ENCODE measurements at regions of chr17 and their contacts with region 1.

Region 1: GRCh38 chr17:50841949-50842354 is 6.6 kb downstream of the WFIKKN2 start:
- DNase-seq: peak; percentile 89 to 94
- H3K4me3 ChIP-seq: no peak overlapping the region
- H3K4me3 Mint-ChIP-seq: no peak overlapping the region
- H3K27ac Mint-ChIP-seq: no peak overlapping the region
- H3K4me1 ChIP-seq: peaks cover 23% of the 10 kb centered on the region
- H3K4me1 Mint-ChIP-seq: peaks cover 10% of the 10 kb centered on the region
- H3K27me3 ChIP-seq: no peaks in the 10 kb centered on the region
- H3K27me3 Mint-ChIP-seq: no peaks in the 10 kb centered on the region
- CTCF ChIP-seq: peak; percentile 98 to 99

Region 2: DNA sequence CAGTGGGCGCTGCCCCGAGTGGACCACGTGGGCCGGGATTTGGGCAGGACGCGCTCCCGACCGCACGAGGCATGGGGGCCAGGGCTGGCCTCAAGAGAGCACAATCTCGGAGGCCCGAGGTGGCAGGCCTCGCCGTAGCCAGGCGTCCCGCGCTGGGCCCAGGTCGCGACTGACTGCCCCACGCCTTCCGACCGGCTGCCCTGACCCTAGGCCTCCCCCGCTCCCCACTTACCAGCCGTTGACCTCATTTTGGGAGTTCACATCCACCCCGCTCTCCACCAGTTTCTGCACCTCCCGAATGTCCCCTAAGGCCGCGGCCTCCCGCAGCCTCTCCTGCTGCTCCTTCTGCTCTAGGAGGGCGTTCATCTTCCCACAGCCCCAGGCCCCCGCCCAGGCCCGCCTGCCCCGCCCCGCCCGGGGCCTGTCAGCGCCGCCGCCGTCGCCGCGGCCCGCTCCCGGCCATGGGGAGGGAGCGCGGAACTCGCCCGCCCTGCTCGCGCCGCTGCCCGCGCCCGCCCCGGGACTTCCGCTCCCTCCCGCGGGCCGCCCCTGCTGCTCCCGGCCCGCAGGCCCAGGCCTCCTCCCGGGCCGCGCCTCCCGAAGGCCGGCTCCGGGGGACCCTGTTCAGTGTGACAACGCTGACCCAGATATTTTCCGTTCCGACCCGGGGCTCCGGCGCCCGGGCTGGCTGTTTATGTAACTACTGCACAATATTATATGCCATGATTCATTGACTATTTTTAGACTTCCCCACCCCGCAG is 134.5 kb before region 1 on chr17 and contains the start of gene ANKRD40:
- CTCF ChIA-PET with region 1: no interaction called
- POLR2A ChIA-PET with region 1: no interaction called
- intact Hi-C with region 1: loop called (anchors 10 kb)
- DNase-seq: peak; percentile 95 to 99
- H3K4me3 ChIP-seq: peak within 1 kb of the TSS; percentile 68
- H3K4me3 Mint-ChIP-seq: peak within 1 kb of the TSS; percentile 97
- H3K27ac Mint-ChIP-seq: peak within 1 kb of the TSS; percentile 79
- H3K4me1 ChIP-seq: peaks cover 15% of the 10 kb centered on the region
- H3K4me1 Mint-ChIP-seq: peaks cover 31% of the 10 kb centered on the region
- H3K27me3 ChIP-seq: no peaks in the 10 kb centered on the region
- H3K27me3 Mint-ChIP-seq: no peaks in the 10 kb centered on the region
- CTCF ChIP-seq: no peak
- total RNA-seq, gene ANKRD40: 113 and 114 TPM in 2 replicates

Region 3: DNA sequence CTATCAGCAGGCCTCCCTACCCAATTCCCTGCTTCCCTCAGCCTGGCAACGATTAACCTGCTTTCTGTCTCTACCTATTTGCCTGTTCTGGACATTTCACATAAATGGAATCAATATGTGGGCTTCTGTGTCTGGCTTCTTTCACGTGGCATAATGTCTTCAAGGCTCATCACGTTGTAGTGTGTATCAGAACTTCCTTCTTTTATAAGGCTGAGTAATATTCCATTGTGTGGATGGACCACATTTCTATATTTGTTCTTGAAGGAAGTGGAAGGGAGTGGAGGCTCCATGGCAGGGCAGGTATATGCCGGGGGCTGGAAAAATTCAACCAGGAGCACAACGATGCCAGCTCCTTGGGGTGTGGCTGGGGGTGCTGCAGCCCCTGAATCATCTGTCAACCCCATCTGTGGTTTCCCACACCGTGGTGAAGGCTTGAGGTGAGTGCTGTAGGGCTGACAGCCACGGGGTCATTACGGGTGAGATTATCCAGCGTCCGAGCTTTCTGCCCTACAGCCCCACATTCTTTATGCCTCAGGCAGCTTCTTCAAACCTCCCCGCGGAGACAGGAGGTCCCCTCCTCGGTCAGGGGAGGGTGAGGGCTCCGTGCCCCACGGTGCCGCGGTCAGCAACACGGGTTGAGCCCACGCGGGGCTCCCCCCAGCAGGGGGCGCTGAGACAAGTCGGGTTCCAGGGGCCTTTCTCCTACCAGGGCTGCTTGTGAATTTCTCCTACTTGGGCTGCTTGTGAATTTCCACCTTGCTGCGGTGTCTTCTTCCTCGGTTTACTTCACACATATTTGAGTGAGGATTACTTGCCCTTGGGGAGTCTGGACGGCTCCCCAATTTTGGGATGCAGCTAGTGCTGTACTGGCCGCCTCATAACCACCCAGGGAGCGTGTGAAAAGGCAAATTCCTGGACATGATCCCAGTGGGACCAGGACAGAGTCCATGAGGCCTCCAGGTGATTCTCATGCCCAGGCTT is 24.9 kb before region 1 on chr17:
- CTCF ChIA-PET with region 1: interaction called, 3 read pairs
- POLR2A ChIA-PET with region 1: no interaction called
- intact Hi-C with region 1: loop called (anchors 1 kb)
- DNase-seq: peak in 1 of 2 experiments; percentile 77
- H3K4me3 ChIP-seq: no peak overlapping the region
- H3K4me3 Mint-ChIP-seq: no peak overlapping the region
- H3K27ac Mint-ChIP-seq: no peak overlapping the region
- H3K4me1 ChIP-seq: peaks cover 9% of the 10 kb centered on the region
- H3K4me1 Mint-ChIP-seq: peaks cover 7% of the 10 kb centered on the region
- H3K27me3 ChIP-seq: no peaks in the 10 kb centered on the region
- H3K27me3 Mint-ChIP-seq: no peaks in the 10 kb centered on the region
- CTCF ChIP-seq: peak; percentile 91 to 95